ENCODE measurements at regions of chr1 and their contacts with region 1.

Region 1: GRCh38 chr1:240414237-240414636 is 197.7 kb downstream of the GREM2 start:
- DNase-seq: no peak
- ATAC-seq: no peak

Region 2: GRCh38 chr1:240508950-240509349 is 94.7 kb after region 1 on chr1:
- intact Hi-C with region 1: loop called in 1 of 2 experiments (anchors 5 kb)
- DNase-seq: no peak
- ATAC-seq: no peak